ENCODE measurements at regions of chr21 and their contacts with region 1.

Region 1: DNA sequence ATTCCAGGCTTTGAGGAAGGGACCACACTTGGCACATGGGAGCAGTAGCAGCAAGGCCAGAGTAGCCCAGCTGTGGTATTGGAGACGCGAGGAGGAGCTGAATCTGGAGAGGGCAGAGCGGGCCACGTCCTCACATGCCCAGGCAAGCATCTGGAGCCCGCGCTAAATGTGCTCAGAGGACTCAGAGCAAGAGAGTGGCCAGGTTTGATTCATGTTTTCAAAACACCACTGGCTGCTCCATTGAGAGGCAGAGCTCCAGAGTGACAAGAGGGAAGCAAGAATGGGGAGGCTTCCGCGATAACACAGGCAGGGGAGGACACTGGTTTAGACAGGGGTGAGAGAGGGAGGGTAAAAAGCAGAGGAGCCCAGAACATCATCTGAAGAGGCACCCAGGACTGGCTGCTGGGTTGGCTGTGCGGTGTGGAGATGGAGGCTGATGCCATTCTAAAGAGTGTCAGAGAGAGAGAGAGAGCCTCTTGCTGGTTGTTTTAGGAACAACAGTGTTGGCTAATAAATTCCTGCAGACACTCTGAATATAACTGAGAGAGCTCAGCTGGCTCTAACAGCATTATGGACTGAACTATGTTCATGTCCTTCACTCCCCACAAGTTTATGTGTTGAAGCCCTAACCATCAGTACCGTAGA is 32.3 kb downstream of the RCAN1 start:
- DNase-seq: peak; percentile 36 to 64 (median 63)
- H3K4me3 ChIP-seq: no peak overlapping the region
- H3K27ac ChIP-seq: no peak overlapping the region
- H3K4me1 ChIP-seq: no peaks in the 10 kb centered on the region
- H3K27me3 ChIP-seq: no peaks in the 10 kb centered on the region

Region 2: GRCh38 chr21:34510148-34511142 is 72.2 kb before region 1 on chr21:
- CTCF ChIA-PET with region 1: interaction called, 24 read pairs
- POLR2A ChIA-PET with region 1: no interaction called
- DNase-seq: peak; percentile 57 to 79 (median 69)
- H3K4me3 ChIP-seq: no peak overlapping the region
- H3K27ac ChIP-seq: no peak overlapping the region
- H3K4me1 ChIP-seq: peaks cover 0 to 15% (median 1%) of the 10 kb centered on the region in 4 experiments
- H3K27me3 ChIP-seq: no peaks in the 10 kb centered on the region

Measured in common myeloid progenitor, CD34-positive (primary cell).